Activated naive CD4-positive, alpha-beta T cell treated with anti-CD3 and anti-CD28 coated beads for 36 hours (primary cell): ENCODE measurements at regions of chr12 and their contacts with region 1.

Region 1: DNA sequence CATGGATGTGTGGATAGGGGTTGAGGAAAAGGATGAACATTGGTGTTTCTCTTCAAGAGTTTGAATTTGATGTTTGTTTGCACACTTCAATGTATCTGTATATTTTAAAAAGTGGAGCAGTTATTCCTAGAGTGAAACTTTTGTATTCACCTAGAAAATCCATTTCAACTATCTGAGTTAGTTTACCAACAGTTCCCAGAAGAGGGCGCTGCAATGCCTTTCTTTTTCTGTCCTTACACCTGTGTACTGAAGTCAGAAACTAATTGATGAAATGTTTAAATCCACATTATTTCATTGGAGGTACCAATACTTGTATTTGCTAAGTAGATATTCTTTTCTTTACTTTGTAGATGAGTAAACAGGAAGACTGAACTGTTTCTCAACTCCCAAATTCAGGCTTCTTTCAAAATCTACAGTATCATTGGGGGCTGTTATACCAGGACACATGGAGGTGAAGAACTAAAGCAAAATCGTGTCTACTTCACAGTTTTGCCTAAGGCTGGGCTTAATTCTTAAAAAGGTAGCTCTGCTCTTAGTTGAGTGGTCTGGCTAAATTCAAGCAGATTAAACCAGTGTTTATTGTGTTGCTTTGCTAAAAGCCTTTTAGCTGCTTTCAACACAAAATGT is 26.6 kb upstream of the KLRB1 start:
- DNase-seq: peak; percentile 95
- H3K4me3 Mint-ChIP-seq: peak overlapping the region; percentile 55
- H3K27ac Mint-ChIP-seq: peak overlapping the region; percentile 90
- H3K4me1 Mint-ChIP-seq: peaks cover 56% of the 10 kb centered on the region
- H3K27me3 Mint-ChIP-seq: no peaks in the 10 kb centered on the region

Region 2: GRCh38 chr12:9687228-9687627 is 52.9 kb after region 1 on chr12:
- CTCF ChIA-PET with region 1: interaction called, 15 read pairs
- intact Hi-C with region 1: no loop called
- DNase-seq: peak; percentile 53
- H3K4me3 Mint-ChIP-seq: no peak overlapping the region
- H3K27ac Mint-ChIP-seq: peak overlapping the region; percentile 72
- H3K4me1 Mint-ChIP-seq: peaks cover 75% of the 10 kb centered on the region
- H3K27me3 Mint-ChIP-seq: no peaks in the 10 kb centered on the region

Region 3: DNA sequence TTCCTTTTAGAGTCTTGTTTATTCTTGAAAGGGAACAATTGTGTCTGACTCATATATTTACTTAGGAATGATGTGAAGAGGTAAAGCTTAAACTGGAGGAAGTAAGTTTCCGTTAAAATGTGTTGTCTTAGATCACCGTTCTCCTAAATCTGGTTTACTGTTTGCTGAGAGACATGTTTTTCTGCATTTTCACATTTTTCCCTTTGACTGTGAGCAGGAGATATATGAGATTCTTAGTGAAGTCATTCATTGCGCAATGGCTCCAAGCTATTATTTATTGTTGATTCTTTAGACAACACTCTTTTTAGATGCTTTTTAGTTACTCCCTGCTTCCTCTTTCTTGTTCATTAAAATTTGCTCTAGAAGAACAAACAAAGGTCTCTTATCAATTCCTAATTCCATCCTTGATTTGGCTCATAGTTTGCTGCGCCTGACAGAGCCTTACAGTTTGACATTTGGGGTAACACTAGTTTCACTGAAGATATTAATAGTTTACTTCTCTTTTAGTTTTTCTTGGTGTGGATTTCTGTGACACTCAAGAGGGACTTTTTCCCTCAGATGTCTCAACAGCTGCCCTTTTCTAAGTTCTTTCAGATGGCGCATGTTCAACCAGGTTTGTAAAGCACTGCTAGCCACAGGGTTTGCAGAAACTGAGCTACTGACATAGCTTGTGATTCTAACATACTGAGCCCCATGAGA is 87.3 kb after region 1 on chr12:
- CTCF ChIA-PET with region 1: interaction called, 11 read pairs
- intact Hi-C with region 1: no loop called
- DNase-seq: no peak
- H3K4me3 Mint-ChIP-seq: no peak overlapping the region
- H3K27ac Mint-ChIP-seq: no peak overlapping the region
- H3K4me1 Mint-ChIP-seq: peaks cover 29% of the 10 kb centered on the region
- H3K27me3 Mint-ChIP-seq: peaks cover 4% of the 10 kb centered on the region

Region 4: DNA sequence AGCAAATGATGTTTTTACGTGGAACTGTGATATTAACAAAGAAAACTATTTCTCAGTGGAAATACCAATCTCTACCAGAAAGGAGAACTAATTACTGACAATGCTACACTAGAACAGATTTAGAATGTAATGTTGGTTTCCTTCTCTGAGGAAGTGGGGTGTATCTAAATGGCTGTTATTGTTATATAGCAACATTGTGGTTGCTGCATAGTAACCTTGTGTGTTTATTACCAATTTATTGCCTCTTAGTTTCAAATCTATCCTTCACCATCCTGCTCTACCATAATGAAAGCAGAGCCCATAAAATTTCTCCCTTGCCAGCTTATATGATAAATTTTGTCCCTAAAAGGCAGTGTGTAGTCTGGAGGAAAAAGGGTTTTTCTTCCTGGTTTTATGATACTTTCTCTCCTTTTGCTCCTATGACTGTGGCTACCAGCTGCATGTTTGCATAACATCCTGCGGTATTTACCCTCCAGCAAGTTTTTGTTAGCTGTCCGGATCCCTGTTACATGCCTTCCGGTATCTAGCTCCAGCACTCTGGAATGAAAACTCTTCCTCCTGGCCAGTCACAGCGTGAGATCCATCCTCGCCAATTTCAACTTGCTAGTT is 761.2 kb after region 1 on chr12:
- CTCF ChIA-PET with region 1: no interaction called
- intact Hi-C with region 1: no loop called
- DNase-seq: no peak
- H3K4me3 Mint-ChIP-seq: no peak overlapping the region
- H3K27ac Mint-ChIP-seq: no peak overlapping the region
- H3K4me1 Mint-ChIP-seq: peaks cover 2% of the 10 kb centered on the region
- H3K27me3 Mint-ChIP-seq: peaks cover 10% of the 10 kb centered on the region